ENCODE measurements at regions of chr2 and their contacts with region 1.

Region 1: DNA sequence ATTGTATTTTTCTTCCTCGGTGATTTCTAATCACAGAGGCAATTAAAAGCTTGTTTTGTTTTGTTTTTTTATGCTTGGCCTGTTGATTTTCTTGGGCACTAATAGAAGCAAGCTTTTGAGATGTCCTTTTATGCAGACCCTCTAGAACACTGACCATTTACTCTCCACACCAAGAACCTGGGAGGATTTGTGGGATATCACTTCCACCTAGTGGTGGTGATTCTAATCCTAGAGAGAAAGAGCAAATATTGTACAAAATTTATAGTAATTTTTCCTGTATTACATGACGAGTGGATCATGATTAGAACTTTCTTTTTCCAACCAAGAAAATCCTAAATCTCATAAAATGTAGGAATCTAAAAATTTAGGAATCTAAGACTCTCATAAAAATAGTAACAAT is 23.4 kb downstream of the NEMP2 start:
- DNase-seq: no peak
- ATAC-seq: peak; percentile 31; the same call in 1 of the 3 replicates
- H3K4me3 ChIP-seq: no peak overlapping the region
- H3K27ac ChIP-seq: no peak overlapping the region
- H3K4me1 ChIP-seq: peaks cover 4% of the 10 kb centered on the region
- H3K27me3 ChIP-seq: no peaks in the 10 kb centered on the region
- CTCF ChIP-seq: peak; percentile 21 to 49 (median 27); a peak in 4 of 6 replicates
- EP300 ChIP-seq: no peak
- POLR2A ChIP-seq: no peak
- RAD21 ChIP-seq: peak; percentile 76

Region 2: GRCh38 chr2:190500054-190500502 is 11.0 kb before region 1 on chr2:
- CTCF ChIA-PET with region 1: interaction called, 4 read pairs
- POLR2A ChIA-PET with region 1: no interaction called
- RAD21 ChIA-PET with region 1: interaction called, 3 read pairs
- SMC1A ChIA-PET with region 1: interaction called, 11 read pairs
- in situ Hi-C with region 1: no loop called
- intact Hi-C with region 1: no loop called
- DNase-seq: no peak
- ATAC-seq: no peak
- H3K4me3 ChIP-seq: no peak overlapping the region
- H3K27ac ChIP-seq: no peak overlapping the region
- H3K4me1 ChIP-seq: no peaks in the 10 kb centered on the region
- H3K27me3 ChIP-seq: no peaks in the 10 kb centered on the region
- CTCF ChIP-seq: no peak
- EP300 ChIP-seq: no peak
- POLR2A ChIP-seq: no peak; the same call in 1 of the 2 replicates
- RAD21 ChIP-seq: no peak

Region 3: GRCh38 chr2:190528521-190529001 is 17.5 kb after region 1 on chr2:
- CTCF ChIA-PET with region 1: interaction called, 6 read pairs
- POLR2A ChIA-PET with region 1: interaction called, 10 read pairs
- RAD21 ChIA-PET with region 1: interaction called, 36 read pairs
- SMC1A ChIA-PET with region 1: interaction called, 36 read pairs
- in situ Hi-C with region 1: no loop called
- intact Hi-C with region 1: no loop called
- DNase-seq: no peak
- ATAC-seq: peak; percentile 6; the same call in 1 of the 3 replicates
- H3K4me3 ChIP-seq: no peak overlapping the region
- H3K27ac ChIP-seq: no peak overlapping the region
- H3K4me1 ChIP-seq: peaks cover 44% of the 10 kb centered on the region
- H3K27me3 ChIP-seq: no peaks in the 10 kb centered on the region
- CTCF ChIP-seq: no peak
- EP300 ChIP-seq: no peak
- POLR2A ChIP-seq: no peak
- RAD21 ChIP-seq: no peak

Region 4: GRCh38 chr2:190599073-190599472 is 88.0 kb after region 1 on chr2:
- CTCF ChIA-PET with region 1: no interaction called
- POLR2A ChIA-PET with region 1: no interaction called
- RAD21 ChIA-PET with region 1: no interaction called
- SMC1A ChIA-PET with region 1: no interaction called
- in situ Hi-C with region 1: no loop called
- intact Hi-C with region 1: no loop called
- DNase-seq: no peak
- ATAC-seq: no peak
- H3K4me3 ChIP-seq: no peak overlapping the region
- H3K27ac ChIP-seq: no peak overlapping the region
- H3K4me1 ChIP-seq: peaks cover 3% of the 10 kb centered on the region
- H3K27me3 ChIP-seq: no peaks in the 10 kb centered on the region
- CTCF ChIP-seq: no peak
- EP300 ChIP-seq: no peak
- POLR2A ChIP-seq: no peak
- RAD21 ChIP-seq: no peak

Region 5: GRCh38 chr2:190693533-190694232 is 182.6 kb after region 1 on chr2:
- CTCF ChIA-PET with region 1: interaction called, 15 read pairs
- POLR2A ChIA-PET with region 1: no interaction called
- RAD21 ChIA-PET with region 1: no interaction called
- SMC1A ChIA-PET with region 1: interaction called, 4 read pairs
- in situ Hi-C with region 1: no loop called
- intact Hi-C with region 1: no loop called
- DNase-seq: no peak
- ATAC-seq: peak; percentile 71
- H3K4me3 ChIP-seq: no peak overlapping the region
- H3K27ac ChIP-seq: peak overlapping the region; percentile 46
- H3K4me1 ChIP-seq: peaks cover 18% of the 10 kb centered on the region
- H3K27me3 ChIP-seq: no peaks in the 10 kb centered on the region
- CTCF ChIP-seq: no peak
- EP300 ChIP-seq: peak; percentile 13 to 58; a peak in 3 of 4 replicates
- POLR2A ChIP-seq: no peak
- RAD21 ChIP-seq: no peak